Body of pancreas (tissue), 4 donors: ENCODE measurements at regions of chr13 and their contacts with region 1.

Region 1: GRCh38 chr13:95834134-95834765 is 157.3 kb downstream of the DNAJC3 start:
- DNase-seq: peak; percentile 57 to 69 (median 65)
- ATAC-seq: peak; percentile 74
- H3K4me3 ChIP-seq: no peak overlapping the region
- H3K27ac ChIP-seq: no peak overlapping the region
- H3K4me1 ChIP-seq: no peaks in the 10 kb centered on the region
- H3K27me3 ChIP-seq: no peaks in the 10 kb centered on the region
- CTCF ChIP-seq: peak; percentile 71 to 94 (median 92)
- POLR2A ChIP-seq: no peak

Region 2: DNA sequence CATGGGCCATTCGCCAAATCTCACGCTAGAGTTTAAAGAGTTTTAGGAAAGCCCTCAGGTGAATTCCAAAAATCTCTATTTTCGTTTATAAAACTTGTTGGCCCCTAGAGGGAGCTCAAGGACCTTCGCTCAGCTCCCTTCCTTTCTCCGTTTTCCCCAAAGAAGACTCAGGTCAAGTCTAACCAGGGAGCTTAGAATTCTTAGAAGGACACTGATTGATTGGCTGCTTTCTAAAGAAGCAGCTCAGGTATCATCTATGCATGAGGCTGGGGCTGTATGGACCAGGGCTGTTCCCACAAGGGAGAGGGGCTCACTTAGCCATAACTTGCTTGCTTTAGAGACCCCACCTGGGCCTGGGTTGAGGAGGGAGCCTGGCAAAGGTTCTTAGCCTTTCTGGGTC is 210.2 kb before region 1 on chr13:
- intact Hi-C with region 1: loop called (anchors 10 kb)
- DNase-seq: peak in 2 of 4 donors; percentile 35 to 37
- ATAC-seq: peak; percentile 53
- H3K4me3 ChIP-seq: no peak overlapping the region
- H3K27ac ChIP-seq: no peak overlapping the region
- H3K4me1 ChIP-seq: peaks cover 15% of the 10 kb centered on the region
- H3K27me3 ChIP-seq: no peaks in the 10 kb centered on the region
- CTCF ChIP-seq: peak; percentile 49 to 74 (median 62)
- POLR2A ChIP-seq: no peak

Region 3: DNA sequence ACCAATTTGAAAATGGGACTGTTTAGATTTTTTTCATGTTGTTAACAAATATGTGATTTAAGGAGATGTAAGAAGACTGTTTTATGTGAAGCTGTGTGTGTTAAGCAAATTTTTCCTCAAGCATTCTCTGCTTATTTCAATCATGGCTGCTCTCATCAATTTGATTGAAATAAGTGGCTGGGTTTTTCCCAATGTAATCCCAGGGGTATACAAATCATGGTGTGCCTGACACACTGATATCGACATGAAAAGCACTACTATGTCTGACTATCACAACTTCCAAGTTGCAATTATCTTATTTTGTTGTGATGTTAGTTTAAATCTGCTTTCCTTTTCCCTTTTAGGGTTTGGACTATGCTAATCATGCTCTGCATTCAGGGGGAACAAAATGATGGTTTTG is 539.3 kb after region 1 on chr13:
- intact Hi-C with region 1: no loop called
- DNase-seq: no peak
- ATAC-seq: no peak
- H3K4me3 ChIP-seq: no peak overlapping the region
- H3K27ac ChIP-seq: no peak overlapping the region
- H3K4me1 ChIP-seq: no peaks in the 10 kb centered on the region
- H3K27me3 ChIP-seq: no peaks in the 10 kb centered on the region
- CTCF ChIP-seq: no peak
- POLR2A ChIP-seq: no peak